ENCODE measurements at regions of chr3 and their contacts with region 1.

Region 1: DNA sequence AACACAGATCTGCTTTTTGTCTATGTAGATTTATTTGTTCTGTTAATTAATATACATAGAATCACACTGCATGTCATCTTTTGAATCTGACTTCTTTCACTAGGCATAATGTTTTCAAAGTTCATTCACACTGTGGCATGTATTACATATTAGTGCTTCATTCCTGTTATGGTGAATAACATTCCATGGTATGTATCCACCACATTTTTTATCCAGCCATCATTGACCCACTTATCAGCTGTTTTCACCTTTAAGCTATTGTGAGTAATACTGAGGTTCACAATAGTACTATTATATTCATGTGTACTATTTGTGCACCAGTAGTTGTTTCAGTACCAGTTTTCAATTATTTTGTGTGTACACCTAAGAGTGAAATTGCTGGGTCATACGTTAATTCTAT is 230.6 kb upstream of the CNTN3 start:
- DNase-seq: no peak
- H3K4me3 ChIP-seq: no peak overlapping the region
- H3K27ac ChIP-seq: no peak overlapping the region
- H3K4me1 ChIP-seq: no peaks in the 10 kb centered on the region
- H3K27me3 ChIP-seq: no peaks in the 10 kb centered on the region
- CTCF ChIP-seq: no peak
- EP300 ChIP-seq: no peak
- POLR2A ChIP-seq: no peak

Region 2: DNA sequence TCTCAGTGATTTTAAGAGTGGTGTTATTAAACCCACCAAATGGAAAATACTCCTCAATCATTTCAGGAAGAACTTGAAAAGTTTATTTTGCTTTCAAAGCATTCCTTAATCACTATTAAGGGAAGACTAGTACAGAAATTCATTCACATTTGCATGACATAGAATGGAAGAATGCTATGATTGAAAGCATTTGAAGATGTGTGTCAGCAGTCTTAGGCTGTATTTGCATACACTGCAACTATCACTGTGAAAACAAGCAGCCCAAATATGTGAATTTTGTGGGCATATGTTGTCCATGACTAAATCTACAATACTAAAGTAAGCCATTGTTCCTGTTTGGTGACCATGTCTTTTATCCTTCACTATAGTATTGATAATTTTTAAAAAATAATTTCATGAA is 326.5 kb before region 1 on chr3:
- intact Hi-C with region 1: no loop called
- DNase-seq: no peak
- H3K4me3 ChIP-seq: no peak overlapping the region
- H3K27ac ChIP-seq: no peak overlapping the region
- H3K4me1 ChIP-seq: no peaks in the 10 kb centered on the region
- H3K27me3 ChIP-seq: no peaks in the 10 kb centered on the region
- CTCF ChIP-seq: no peak
- EP300 ChIP-seq: no peak
- POLR2A ChIP-seq: no peak

Region 3: GRCh38 chr3:76554707-76555106 is 1709.6 kb after region 1 on chr3:
- intact Hi-C with region 1: loop called in 1 of 4 experiments (anchors 5 kb)
- DNase-seq: no peak
- H3K4me3 ChIP-seq: no peak overlapping the region
- H3K27ac ChIP-seq: no peak overlapping the region
- H3K4me1 ChIP-seq: no peaks in the 10 kb centered on the region
- H3K27me3 ChIP-seq: no peaks in the 10 kb centered on the region
- CTCF ChIP-seq: no peak
- EP300 ChIP-seq: no peak
- POLR2A ChIP-seq: no peak